ENCODE measurements at regions of chr15 and their contacts with region 1.

Region 1: DNA sequence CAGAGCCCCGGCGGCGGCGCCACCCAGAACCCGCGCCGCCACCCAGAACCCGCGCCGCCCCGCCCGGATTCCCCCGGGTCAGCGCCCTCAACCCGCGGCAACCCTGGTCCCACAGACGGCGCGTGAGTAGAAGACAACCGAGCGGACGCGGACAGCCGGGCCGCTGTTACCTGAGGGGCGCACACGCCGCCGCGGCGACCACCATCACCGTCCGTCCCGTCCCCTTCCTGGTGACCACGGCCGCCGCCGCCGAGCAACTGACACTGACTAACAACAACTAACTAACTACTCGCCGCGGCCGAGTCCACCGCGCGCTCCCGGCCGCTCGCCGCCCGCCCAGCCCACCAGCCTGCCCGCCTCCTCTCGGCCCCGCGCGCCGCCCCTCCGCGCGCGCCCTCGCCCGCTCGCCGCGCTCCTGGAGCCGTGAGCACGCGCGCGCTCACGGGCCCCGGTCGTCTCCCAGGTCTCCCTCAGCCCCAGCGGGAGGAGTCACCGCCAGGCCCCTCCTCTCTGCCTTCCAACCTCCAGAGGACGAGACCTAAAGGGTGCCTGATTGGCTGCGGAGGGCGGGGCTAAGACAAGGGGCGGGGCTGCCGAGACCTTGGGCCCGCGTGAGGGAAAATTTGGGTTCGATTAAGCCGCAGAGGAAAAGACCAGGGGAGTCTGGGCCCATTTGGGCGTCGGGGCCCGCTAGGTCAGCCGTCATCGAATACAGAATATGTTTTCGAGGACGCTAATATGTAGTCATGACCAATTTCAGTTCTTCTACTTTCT is at the start of gene PEAK1:
- DNase-seq: peak; percentile 100
- H3K4me3 Mint-ChIP-seq: peak within 1 kb of the TSS; percentile 96
- H3K27ac Mint-ChIP-seq: peak within 1 kb of the TSS; percentile 98
- H3K4me1 Mint-ChIP-seq: peaks cover 30% of the 10 kb centered on the region
- H3K27me3 Mint-ChIP-seq: peaks cover 2% of the 10 kb centered on the region
- total RNA-seq, gene PEAK1: 15.6 to 18.3 TPM

Region 2: DNA sequence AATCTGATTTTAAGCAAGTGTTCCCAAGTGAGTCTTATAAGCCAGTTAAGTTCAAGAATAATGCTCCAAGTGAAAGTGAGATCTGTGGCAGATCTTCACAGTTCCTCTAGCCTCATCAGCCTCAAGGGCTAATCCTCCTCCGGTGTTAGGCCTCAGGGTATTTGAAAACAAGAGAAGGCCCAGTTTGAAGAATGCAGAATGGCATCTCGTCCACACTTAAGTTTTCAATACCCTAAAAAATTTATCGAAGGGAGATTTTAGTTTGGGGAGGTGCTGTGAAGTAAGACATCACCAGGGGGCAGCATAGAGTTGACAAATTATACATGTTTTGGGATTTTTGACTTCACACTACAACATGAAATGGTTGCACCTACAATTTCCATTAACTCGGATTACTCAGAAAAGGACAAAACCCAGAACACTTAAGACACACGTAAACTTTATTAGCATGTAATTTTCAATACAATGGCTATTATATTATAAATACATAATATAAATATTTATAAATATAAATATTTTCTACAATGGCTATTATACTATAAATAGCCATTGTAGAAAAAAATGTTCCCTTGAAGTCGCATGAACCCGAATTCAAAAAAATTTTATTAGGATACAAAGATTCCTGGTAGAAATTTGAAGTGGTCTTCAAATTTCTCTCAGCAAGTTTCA is 1362.6 kb before region 1 on chr15:
- CTCF ChIA-PET with region 1: no interaction called
- POLR2A ChIA-PET with region 1: no interaction called
- intact Hi-C with region 1: loop called (anchors 10 kb)
- DNase-seq: peak; percentile 45
- H3K4me3 Mint-ChIP-seq: no peak overlapping the region
- H3K27ac Mint-ChIP-seq: no peak overlapping the region
- H3K4me1 Mint-ChIP-seq: peaks cover 19% of the 10 kb centered on the region
- H3K27me3 Mint-ChIP-seq: peaks cover 44% of the 10 kb centered on the region

Region 3: GRCh38 chr15:76696871-76697270 is 723.2 kb before region 1 on chr15:
- CTCF ChIA-PET with region 1: no interaction called
- POLR2A ChIA-PET with region 1: no interaction called
- intact Hi-C with region 1: no loop called
- DNase-seq: no peak
- H3K4me3 Mint-ChIP-seq: no peak overlapping the region
- H3K27ac Mint-ChIP-seq: no peak overlapping the region
- H3K4me1 Mint-ChIP-seq: no peaks in the 10 kb centered on the region
- H3K27me3 Mint-ChIP-seq: no peaks in the 10 kb centered on the region

Region 4: GRCh38 chr15:76994971-76995945 is 424.8 kb before region 1 on chr15 and contains the start of gene PSTPIP1:
- CTCF ChIA-PET with region 1: no interaction called
- POLR2A ChIA-PET with region 1: interaction called, 3 read pairs
- intact Hi-C with region 1: loop called (anchors 5 kb)
- DNase-seq: peak; percentile 83
- H3K4me3 Mint-ChIP-seq: peak within 1 kb of the TSS; percentile 92
- H3K27ac Mint-ChIP-seq: peak within 1 kb of the TSS; percentile 99
- H3K4me1 Mint-ChIP-seq: peaks cover 60% of the 10 kb centered on the region
- H3K27me3 Mint-ChIP-seq: no peaks in the 10 kb centered on the region
- total RNA-seq, gene PSTPIP1: 155 to 164 TPM

Region 5: DNA sequence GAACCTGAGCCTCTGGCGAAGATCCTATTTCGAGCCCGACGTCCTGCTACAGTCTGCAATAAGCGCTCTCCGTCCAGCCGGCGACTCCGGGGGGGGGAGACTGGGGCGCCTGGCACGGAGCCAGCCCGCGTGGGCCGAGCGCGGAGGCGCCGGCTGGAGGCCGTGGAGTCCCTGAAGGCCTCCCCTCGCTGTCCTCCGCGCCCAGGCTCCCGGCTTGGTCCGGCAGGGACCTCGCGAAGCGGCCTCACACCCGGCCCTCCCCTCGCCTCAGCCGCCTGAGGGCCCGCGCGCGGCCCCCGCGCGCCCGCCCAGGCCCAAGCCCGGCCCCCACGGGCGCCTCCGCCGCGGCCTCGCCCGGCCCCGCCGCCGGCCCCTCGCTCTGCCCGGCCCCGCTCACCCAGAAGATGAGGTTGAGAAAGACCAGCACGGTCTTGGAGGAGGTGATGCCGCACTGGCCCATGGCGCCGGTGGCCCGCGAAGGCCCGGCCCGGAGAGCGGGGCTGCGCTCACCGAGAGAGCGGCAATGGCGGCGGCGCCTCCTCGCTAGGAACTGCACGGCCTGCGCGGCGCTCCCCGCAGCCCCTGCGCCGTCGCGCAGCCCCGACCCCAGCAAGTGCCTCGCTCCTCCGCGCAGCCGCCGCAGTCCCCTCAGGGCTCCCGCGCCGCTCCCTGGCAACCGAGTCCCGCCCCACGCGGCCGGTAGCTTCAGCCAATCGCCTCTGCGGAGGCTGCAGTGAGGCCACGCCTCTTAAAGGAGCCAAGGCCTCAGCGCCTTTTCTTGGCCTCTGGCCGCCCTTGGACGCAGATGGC is 349.3 kb before region 1 on chr15 and contains the start of gene TSPAN3:
- CTCF ChIA-PET with region 1: no interaction called
- POLR2A ChIA-PET with region 1: no interaction called
- intact Hi-C with region 1: loop called (anchors 1 kb)
- DNase-seq: peak; percentile 94
- H3K4me3 Mint-ChIP-seq: peak within 1 kb of the TSS; percentile 76
- H3K27ac Mint-ChIP-seq: no peak within 1 kb of the TSS
- H3K4me1 Mint-ChIP-seq: peaks cover 31% of the 10 kb centered on the region
- H3K27me3 Mint-ChIP-seq: no peaks in the 10 kb centered on the region
- total RNA-seq, gene TSPAN3: 28.9 to 29.1 TPM

Region 6: GRCh38 chr15:77347208-77347607 is 72.8 kb before region 1 on chr15:
- CTCF ChIA-PET with region 1: no interaction called
- POLR2A ChIA-PET with region 1: no interaction called
- intact Hi-C with region 1: no loop called
- DNase-seq: no peak
- H3K4me3 Mint-ChIP-seq: no peak overlapping the region
- H3K27ac Mint-ChIP-seq: no peak overlapping the region
- H3K4me1 Mint-ChIP-seq: no peaks in the 10 kb centered on the region
- H3K27me3 Mint-ChIP-seq: no peaks in the 10 kb centered on the region

Region 7: GRCh38 chr15:77409259-77410156 is 10.5 kb before region 1 on chr15:
- CTCF ChIA-PET with region 1: interaction called, 3 read pairs
- POLR2A ChIA-PET with region 1: interaction called, 3 read pairs
- intact Hi-C with region 1: loop called (anchors 1 kb)
- DNase-seq: peak; percentile 43
- H3K4me3 Mint-ChIP-seq: peak overlapping the region; percentile 25
- H3K27ac Mint-ChIP-seq: peak overlapping the region; percentile 47
- H3K4me1 Mint-ChIP-seq: peaks cover 27% of the 10 kb centered on the region
- H3K27me3 Mint-ChIP-seq: no peaks in the 10 kb centered on the region

Region 8: GRCh38 chr15:77430213-77430612 is 10.2 kb after region 1 on chr15:
- CTCF ChIA-PET with region 1: interaction called, 5 read pairs
- POLR2A ChIA-PET with region 1: interaction called, 12 read pairs
- intact Hi-C with region 1: loop called (anchors 1 kb)
- DNase-seq: no peak
- H3K4me3 Mint-ChIP-seq: no peak overlapping the region
- H3K27ac Mint-ChIP-seq: peak overlapping the region; percentile 66
- H3K4me1 Mint-ChIP-seq: peaks cover 35% of the 10 kb centered on the region
- H3K27me3 Mint-ChIP-seq: no peaks in the 10 kb centered on the region